HepG2 (cell line): ENCODE measurements at regions of chr1 and their contacts with region 1.

Region 1: GRCh38 chr1:44730741-44731512 is at the start of gene RNU5D-1:
- DNase-seq: peak; percentile 95
- ATAC-seq: peak; percentile 82
- H3K4me3 ChIP-seq: peak within 1 kb of the TSS; percentile 45 to 62 (median 48)
- H3K27ac ChIP-seq: peak within 1 kb of the TSS; percentile 100
- H3K4me1 ChIP-seq: peaks cover 60% of the 10 kb centered on the region
- H3K27me3 ChIP-seq: no peaks in the 10 kb centered on the region; a peak in 2 of 5 replicates
- CTCF ChIP-seq: peak; percentile 79
- EP300 ChIP-seq: peak in 1 of 2 experiments; percentile 27; a peak in 1 of 4 replicates
- POLR2A ChIP-seq: peak; percentile 97 to 100
- RAD21 ChIP-seq: peak; percentile 59
- total RNA-seq, gene RNU5D-1: 165 TPM in 1 of 2 replicates, not detected in the other

Region 2: GRCh38 chr1:44339731-44340130 is 391.2 kb before region 1 on chr1:
- CTCF ChIA-PET with region 1: no interaction called
- POLR2A ChIA-PET with region 1: no interaction called
- in situ Hi-C with region 1: no loop called
- intact Hi-C with region 1: no loop called
- DNase-seq: no peak
- ATAC-seq: no peak; the same call in 2 of the 3 replicates
- H3K4me3 ChIP-seq: no peak overlapping the region
- H3K27ac ChIP-seq: peak overlapping the region; percentile 23
- H3K4me1 ChIP-seq: peaks cover 12% of the 10 kb centered on the region
- H3K27me3 ChIP-seq: no peaks in the 10 kb centered on the region
- CTCF ChIP-seq: no peak
- EP300 ChIP-seq: no peak
- POLR2A ChIP-seq: no peak
- RAD21 ChIP-seq: no peak

Region 3: DNA sequence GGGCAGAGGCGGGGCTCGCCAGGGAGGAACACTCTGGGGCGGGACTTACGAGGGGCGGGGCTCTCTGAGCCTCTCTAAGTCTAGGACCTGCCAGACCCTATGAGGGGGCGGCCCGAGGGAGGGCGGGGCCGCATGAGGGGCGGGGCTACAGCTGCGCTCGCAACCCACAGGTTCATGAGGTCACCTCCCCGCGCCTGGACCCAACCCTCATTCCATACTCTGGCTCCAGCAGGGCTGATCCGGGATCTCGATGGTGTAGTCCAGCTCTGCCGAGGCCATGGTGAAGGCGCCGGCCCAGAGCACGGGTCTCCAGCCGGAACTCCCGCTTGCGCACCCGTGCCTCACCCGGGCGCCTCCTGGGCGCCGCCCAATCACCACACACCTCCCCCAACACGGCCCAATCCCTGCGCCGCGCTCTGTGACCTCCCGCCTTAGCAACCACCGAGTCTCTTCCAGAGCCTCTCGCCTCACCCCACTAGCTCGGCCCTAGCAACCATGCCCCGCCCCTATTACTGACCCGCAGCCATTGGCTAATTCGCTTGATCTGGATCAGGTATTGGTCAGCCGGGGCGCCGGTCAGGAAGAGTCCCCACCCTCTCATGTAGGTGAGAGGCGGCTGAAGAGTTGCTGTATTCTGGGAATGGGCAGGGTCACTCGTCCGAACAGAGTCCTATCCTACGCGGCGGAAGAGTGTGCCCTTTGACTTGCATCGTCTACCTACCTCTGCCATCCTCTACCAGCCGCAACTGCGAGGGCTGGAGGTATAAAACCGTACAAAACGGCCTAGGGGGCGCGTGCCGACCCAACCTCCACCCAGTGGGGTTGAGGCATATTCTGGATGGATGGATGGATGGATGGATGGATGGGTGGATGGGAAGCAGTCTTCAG is 56.6 kb before region 1 on chr1 and contains the starts of genes ARMH1 and TMEM53:
- CTCF ChIA-PET with region 1: no interaction called
- POLR2A ChIA-PET with region 1: interaction called, 16 read pairs
- in situ Hi-C with region 1: no loop called
- intact Hi-C with region 1: no loop called
- DNase-seq: peak; percentile 98
- ATAC-seq: peak; percentile 93
- H3K4me3 ChIP-seq: peak within 1 kb of the TSS; percentile 64 to 76 (median 67)
- H3K27ac ChIP-seq: peak within 1 kb of the TSS; percentile 93
- H3K4me1 ChIP-seq: peaks cover 65% of the 10 kb centered on the region
- H3K27me3 ChIP-seq: no peaks in the 10 kb centered on the region
- CTCF ChIP-seq: peak; percentile 32; the same call in 1 of the 2 replicates
- EP300 ChIP-seq: peak in 1 of 2 experiments; percentile 18; a peak in 2 of 4 replicates
- POLR2A ChIP-seq: peak; percentile 70 to 91
- RAD21 ChIP-seq: peak; percentile 47; the same call in 1 of the 2 replicates
- total RNA-seq, gene ARMH1: not detected in 2 replicates
- total RNA-seq, gene TMEM53: 12.6 and 13.8 TPM in 2 replicates

Region 4: GRCh38 chr1:44775078-44775929 is 44.4 kb after region 1 on chr1 and contains the start of gene RPS8:
- CTCF ChIA-PET with region 1: no interaction called
- POLR2A ChIA-PET with region 1: interaction called, 32 read pairs
- in situ Hi-C with region 1: no loop called
- intact Hi-C with region 1: loop called (anchors 5 kb)
- DNase-seq: peak; percentile 91
- ATAC-seq: peak; percentile 80
- H3K4me3 ChIP-seq: peak within 1 kb of the TSS; percentile 84 to 97 (median 96)
- H3K27ac ChIP-seq: peak within 1 kb of the TSS; percentile 81
- H3K4me1 ChIP-seq: peaks cover 40% of the 10 kb centered on the region
- H3K27me3 ChIP-seq: no peaks in the 10 kb centered on the region; a peak in 1 of 5 replicates
- CTCF ChIP-seq: 0 out of 2 replicates have a peak, but pooled peaks have one; percentile 9
- EP300 ChIP-seq: 0 out of 4 replicates have a peak, but pooled peaks of 1 of the 2 experiments have one; percentile 11
- POLR2A ChIP-seq: peak; percentile 99
- RAD21 ChIP-seq: peak; percentile 39
- total RNA-seq, gene RPS8: 2,628 and 3,186 TPM in 2 replicates

Region 5: GRCh38 chr1:44786138-44786840 is 55.4 kb after region 1 on chr1:
- CTCF ChIA-PET with region 1: interaction called, 3 read pairs
- POLR2A ChIA-PET with region 1: interaction called, 14 read pairs
- in situ Hi-C with region 1: no loop called
- intact Hi-C with region 1: loop called (anchors 5 kb)
- DNase-seq: peak; percentile 60
- ATAC-seq: peak; percentile 23
- H3K4me3 ChIP-seq: peak overlapping the region in 2 of 3 experiments; percentile 34 to 79; a peak in 3 of 6 replicates
- H3K27ac ChIP-seq: no peak overlapping the region
- H3K4me1 ChIP-seq: peaks cover 61% of the 10 kb centered on the region
- H3K27me3 ChIP-seq: peaks cover 3 to 17% of the 10 kb centered on the region in 2 experiments; a peak in 2 of 5 replicates
- CTCF ChIP-seq: peak; percentile 91
- EP300 ChIP-seq: peak; percentile 9 to 62; a peak in 1 of 4 replicates
- POLR2A ChIP-seq: no peak; a peak in 1 of 4 replicates
- RAD21 ChIP-seq: peak; percentile 87

Region 6: DNA sequence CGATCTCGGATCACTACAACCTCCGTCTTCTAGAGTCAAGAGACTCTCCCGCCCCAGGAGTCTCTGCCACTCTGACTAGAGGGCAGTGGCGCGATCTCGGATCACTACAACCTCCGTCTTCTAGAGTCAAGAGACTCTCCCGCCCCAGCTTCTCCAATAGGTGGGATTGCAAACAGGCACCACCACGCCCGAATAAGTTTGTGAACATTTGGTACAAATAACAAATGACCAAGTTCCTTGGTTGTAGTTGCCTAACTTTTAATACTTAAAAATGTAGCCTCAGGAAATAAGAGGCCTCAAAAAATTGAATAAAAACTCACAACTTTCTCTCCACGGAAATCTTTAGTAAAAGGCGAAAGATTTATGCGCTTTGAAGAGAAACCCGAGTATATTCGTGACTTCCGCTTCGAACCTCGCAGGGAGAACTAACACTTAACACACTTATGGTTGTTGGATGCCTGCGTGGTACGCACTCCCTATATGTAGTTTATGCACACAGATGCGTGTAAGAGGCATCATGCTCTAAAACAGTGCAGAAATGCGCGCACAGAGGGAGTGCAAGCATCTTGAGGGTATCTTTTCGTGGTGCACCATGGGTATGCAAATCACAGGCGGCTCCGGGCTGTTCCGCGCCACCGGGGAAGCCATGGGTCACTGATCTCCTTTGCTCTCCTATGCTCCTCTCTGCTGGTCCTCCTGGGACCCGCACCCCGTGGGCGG is 88.8 kb after region 1 on chr1:
- CTCF ChIA-PET with region 1: no interaction called
- POLR2A ChIA-PET with region 1: interaction called, 28 read pairs
- in situ Hi-C with region 1: no loop called
- intact Hi-C with region 1: no loop called
- DNase-seq: peak; percentile 90
- ATAC-seq: peak; percentile 89
- H3K4me3 ChIP-seq: peak overlapping the region; percentile 57 to 80 (median 64)
- H3K27ac ChIP-seq: peak overlapping the region; percentile 100
- H3K4me1 ChIP-seq: peaks cover 30% of the 10 kb centered on the region
- H3K27me3 ChIP-seq: no peaks in the 10 kb centered on the region
- CTCF ChIP-seq: peak; percentile 36; the same call in 1 of the 2 replicates
- EP300 ChIP-seq: peak; percentile 64 to 75; a peak in 2 of 4 replicates
- POLR2A ChIP-seq: peak in 1 of 2 experiments; percentile 100; a peak in 2 of 4 replicates
- RAD21 ChIP-seq: peak; percentile 38